ENCODE measurements at regions of chr2 and their contacts with region 1.

Region 1: DNA sequence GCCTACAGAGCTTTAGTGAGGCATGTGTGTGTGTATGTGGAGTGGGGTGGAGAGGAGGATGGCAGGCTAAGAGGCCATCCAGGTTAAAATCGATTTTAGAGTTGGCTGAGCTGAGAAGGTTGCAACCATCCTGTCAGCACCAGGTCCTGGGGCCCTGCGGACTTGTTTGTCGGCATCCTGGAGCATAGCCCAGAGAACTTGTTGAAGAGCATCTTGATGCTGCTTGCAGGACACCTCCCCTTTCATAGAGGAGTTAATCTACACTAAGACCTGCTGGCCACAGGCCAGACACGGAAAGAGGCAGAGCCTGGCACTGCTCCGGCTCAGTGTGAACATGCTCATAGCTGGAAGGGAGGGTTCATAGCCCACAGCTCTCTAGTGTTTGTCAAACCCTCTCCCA is 72.1 kb upstream of the RGPD5 start:
- DNase-seq: no peak
- ATAC-seq: peak; percentile 18
- H3K4me3 ChIP-seq: no peak overlapping the region
- H3K4me1 ChIP-seq: peaks cover 3% of the 10 kb centered on the region
- CTCF ChIP-seq: no peak

Region 2: DNA sequence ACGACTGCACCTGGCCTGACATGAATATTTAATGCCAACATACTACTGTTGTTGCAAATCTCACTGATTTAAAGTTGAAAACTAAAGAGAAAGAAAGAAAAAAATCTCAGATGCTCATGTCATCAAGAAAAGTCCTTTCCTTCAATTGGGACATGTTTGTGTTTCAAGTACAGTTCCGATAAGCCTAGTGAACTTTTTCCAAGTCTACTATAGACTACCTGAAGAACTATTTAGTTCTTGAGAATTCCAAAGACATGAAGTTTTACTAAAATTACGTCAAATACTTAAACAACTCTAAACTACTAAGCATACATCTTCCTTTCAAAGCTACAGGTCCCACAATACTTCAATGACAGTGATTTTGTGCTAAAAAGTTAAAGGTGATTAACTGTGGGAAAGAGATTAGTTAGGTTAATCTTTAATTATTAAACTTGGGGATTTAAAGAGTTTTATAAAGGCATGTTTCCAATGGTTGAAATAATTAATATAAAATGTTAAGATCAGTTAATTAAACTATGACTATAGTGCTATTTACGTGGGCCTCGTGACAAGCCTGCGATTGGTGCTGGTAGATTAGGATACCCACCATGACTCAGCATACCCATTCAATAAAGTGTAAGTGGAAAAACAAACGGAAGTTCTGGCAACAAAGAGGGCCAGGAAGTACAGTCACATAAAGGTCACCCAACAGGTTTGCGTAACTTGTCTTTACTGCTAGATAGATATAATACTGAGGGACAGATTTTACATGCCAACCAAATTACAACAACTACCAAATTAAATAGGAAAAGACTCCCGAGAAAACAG is 163.7 kb before region 1 on chr2:
- intact Hi-C with region 1: loop called in 1 of 2 experiments (anchors 10 kb)
- DNase-seq: peak in 1 of 3 donors; percentile 60
- ATAC-seq: peak; percentile 98
- H3K4me3 ChIP-seq: no peak overlapping the region
- H3K4me1 ChIP-seq: no peaks in the 10 kb centered on the region
- CTCF ChIP-seq: no peak

Region 3: GRCh38 chr2:109594246-109594885 is 127.7 kb before region 1 on chr2:
- intact Hi-C with region 1: no loop called
- DNase-seq: no peak
- ATAC-seq: no peak
- H3K4me3 ChIP-seq: no peak overlapping the region
- H3K4me1 ChIP-seq: no peaks in the 10 kb centered on the region
- CTCF ChIP-seq: no peak

Region 4: GRCh38 chr2:109690822-109691547 is 31.0 kb before region 1 on chr2:
- intact Hi-C with region 1: no loop called
- DNase-seq: peak; percentile 65 to 94 (median 66)
- ATAC-seq: peak; percentile 91
- H3K4me3 ChIP-seq: no peak overlapping the region
- H3K4me1 ChIP-seq: peaks cover 44% of the 10 kb centered on the region
- CTCF ChIP-seq: no peak